ENCODE measurements at regions of chr10 and their contacts with region 1.

Region 1: GRCh38 chr10:124741281-124741921 is 2.8 kb downstream of the FAM53B start:
- DNase-seq: peak; percentile 67
- ATAC-seq: peak; percentile 54
- H3K4me3 Mint-ChIP-seq: peak overlapping the region; percentile 97
- H3K27ac Mint-ChIP-seq: peak overlapping the region; percentile 97
- H3K4me1 Mint-ChIP-seq: peaks cover 75% of the 10 kb centered on the region
- H3K27me3 Mint-ChIP-seq: no peaks in the 10 kb centered on the region
- CTCF ChIP-seq: peak; percentile 41

Region 2: GRCh38 chr10:123994417-123995081 is 746.9 kb before region 1 on chr10:
- CTCF ChIA-PET with region 1: interaction called, 26 read pairs
- POLR2A ChIA-PET with region 1: no interaction called
- intact Hi-C with region 1: loop called (anchors 1 kb)
- DNase-seq: peak; percentile 89
- ATAC-seq: peak; percentile 85
- H3K4me3 Mint-ChIP-seq: peak overlapping the region; percentile 73
- H3K27ac Mint-ChIP-seq: no peak overlapping the region
- H3K4me1 Mint-ChIP-seq: peaks cover 42% of the 10 kb centered on the region
- H3K27me3 Mint-ChIP-seq: peaks cover 38% of the 10 kb centered on the region
- CTCF ChIP-seq: peak; percentile 91

Region 3: GRCh38 chr10:124461438-124462347 is 279.7 kb before region 1 on chr10 and contains the start of gene LHPP:
- CTCF ChIA-PET with region 1: no interaction called
- POLR2A ChIA-PET with region 1: interaction called, 10 read pairs
- intact Hi-C with region 1: loop called (anchors 1 kb)
- DNase-seq: peak; percentile 91
- ATAC-seq: peak; percentile 92
- H3K4me3 Mint-ChIP-seq: peak within 1 kb of the TSS; percentile 92
- H3K27ac Mint-ChIP-seq: peak within 1 kb of the TSS; percentile 95
- H3K4me1 Mint-ChIP-seq: peaks cover 32% of the 10 kb centered on the region
- H3K27me3 Mint-ChIP-seq: peaks cover 4% of the 10 kb centered on the region
- CTCF ChIP-seq: no peak
- total RNA-seq, gene LHPP: 21.0 and 22.9 TPM in 2 replicates

Region 4: DNA sequence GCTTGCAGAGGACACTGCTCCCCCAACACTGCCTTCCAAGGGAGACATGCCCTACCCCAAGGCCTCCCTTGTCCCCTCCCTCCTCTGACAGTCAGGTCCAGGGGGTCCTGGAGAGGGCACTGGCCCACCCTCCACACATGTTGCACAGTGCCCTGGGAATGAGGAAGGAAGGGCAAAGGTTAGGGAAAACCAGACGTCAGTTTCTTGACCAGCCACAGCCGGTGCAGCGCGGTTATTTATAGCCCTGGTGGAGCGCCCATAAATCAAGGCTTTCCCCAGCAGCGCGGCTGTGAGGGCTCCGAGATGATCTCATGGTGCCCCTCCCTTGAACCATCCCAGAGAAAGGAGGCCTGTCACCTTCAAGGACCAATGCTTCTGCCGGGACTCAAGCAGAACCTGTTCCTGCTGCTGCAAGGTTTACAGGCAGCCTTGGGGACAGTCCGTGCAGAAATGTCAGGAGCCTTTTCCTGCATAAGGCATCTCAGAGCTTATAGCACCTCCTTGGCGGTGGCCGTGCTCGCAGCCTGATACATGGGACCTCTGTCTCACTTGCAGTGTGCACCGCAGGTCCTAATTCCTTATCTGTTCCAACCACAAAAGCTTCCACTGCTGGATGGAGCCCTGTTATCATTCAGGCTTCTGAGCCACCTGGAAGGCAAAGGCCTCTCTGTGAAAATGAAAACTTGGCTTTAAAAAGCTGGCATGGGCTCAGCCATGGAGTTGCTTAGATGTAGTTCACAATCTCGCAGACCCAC is 152.5 kb before region 1 on chr10:
- CTCF ChIA-PET with region 1: interaction called, 4 read pairs
- POLR2A ChIA-PET with region 1: interaction called, 11 read pairs
- intact Hi-C with region 1: no loop called
- DNase-seq: no peak
- ATAC-seq: no peak
- H3K4me3 Mint-ChIP-seq: no peak overlapping the region
- H3K27ac Mint-ChIP-seq: no peak overlapping the region
- H3K4me1 Mint-ChIP-seq: peaks cover 57% of the 10 kb centered on the region
- H3K27me3 Mint-ChIP-seq: no peaks in the 10 kb centered on the region
- CTCF ChIP-seq: no peak

Region 5: GRCh38 chr10:124632064-124632531 is 109.3 kb before region 1 on chr10:
- CTCF ChIA-PET with region 1: interaction called, 40 read pairs
- POLR2A ChIA-PET with region 1: interaction called, 13 read pairs
- intact Hi-C with region 1: no loop called
- DNase-seq: no peak
- ATAC-seq: no peak
- H3K4me3 Mint-ChIP-seq: no peak overlapping the region
- H3K27ac Mint-ChIP-seq: peak overlapping the region; percentile 95
- H3K4me1 Mint-ChIP-seq: peaks cover 95% of the 10 kb centered on the region
- H3K27me3 Mint-ChIP-seq: no peaks in the 10 kb centered on the region
- CTCF ChIP-seq: no peak

Region 6: GRCh38 chr10:124688889-124689670 is 52.3 kb before region 1 on chr10:
- CTCF ChIA-PET with region 1: interaction called, 43 read pairs
- POLR2A ChIA-PET with region 1: interaction called, 25 read pairs
- intact Hi-C with region 1: loop called (anchors 1 kb)
- DNase-seq: no peak
- ATAC-seq: peak; percentile 51
- H3K4me3 Mint-ChIP-seq: no peak overlapping the region
- H3K27ac Mint-ChIP-seq: peak overlapping the region; percentile 86
- H3K4me1 Mint-ChIP-seq: peaks cover 84% of the 10 kb centered on the region
- H3K27me3 Mint-ChIP-seq: no peaks in the 10 kb centered on the region
- CTCF ChIP-seq: no peak

Region 7: DNA sequence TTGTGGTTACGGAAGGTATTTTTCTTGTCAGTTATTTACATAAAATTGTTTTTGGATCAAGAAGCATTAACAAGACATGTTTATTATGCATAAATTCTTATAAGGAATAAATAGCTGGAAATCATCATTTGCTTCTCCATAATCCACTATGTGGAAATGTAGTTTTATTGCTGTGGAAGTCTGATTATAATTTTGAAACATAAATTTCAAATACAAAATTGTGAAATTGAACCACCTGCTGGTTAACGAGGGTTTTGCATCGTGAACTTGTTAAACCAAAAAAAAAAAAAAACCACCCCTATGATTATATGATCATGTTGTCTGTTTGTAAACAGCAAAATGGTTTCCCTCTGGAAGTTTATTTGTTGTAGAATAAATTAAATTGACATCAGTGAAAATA is 86.1 kb after region 1 on chr10:
- CTCF ChIA-PET with region 1: no interaction called
- POLR2A ChIA-PET with region 1: no interaction called
- intact Hi-C with region 1: loop called (anchors 2 kb)
- DNase-seq: no peak
- ATAC-seq: no peak
- H3K4me3 Mint-ChIP-seq: no peak overlapping the region
- H3K27ac Mint-ChIP-seq: no peak overlapping the region
- H3K4me1 Mint-ChIP-seq: no peaks in the 10 kb centered on the region
- H3K27me3 Mint-ChIP-seq: no peaks in the 10 kb centered on the region
- CTCF ChIP-seq: no peak

Region 8: DNA sequence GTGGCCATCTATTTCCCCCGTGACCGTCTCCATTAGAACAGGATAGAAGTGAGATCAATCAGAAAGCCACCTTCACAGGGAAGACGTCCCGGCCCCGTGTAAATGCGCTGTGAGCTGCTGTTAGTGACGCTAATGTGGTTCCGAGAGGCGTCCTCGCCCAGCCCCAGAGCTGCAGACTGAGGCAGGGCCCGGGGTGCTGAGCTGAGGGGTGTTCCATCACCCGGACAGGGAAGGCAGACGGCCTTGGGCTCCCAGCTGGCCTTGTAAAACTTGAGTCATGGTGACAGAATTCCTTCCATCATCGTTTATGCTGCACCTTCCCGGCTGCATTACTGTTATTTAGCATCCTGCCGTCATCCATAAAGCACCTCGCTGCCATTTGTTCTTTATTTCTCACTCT is 614.3 kb after region 1 on chr10:
- CTCF ChIA-PET with region 1: no interaction called
- POLR2A ChIA-PET with region 1: no interaction called
- intact Hi-C with region 1: no loop called
- DNase-seq: no peak
- ATAC-seq: no peak
- H3K4me3 Mint-ChIP-seq: no peak overlapping the region
- H3K27ac Mint-ChIP-seq: no peak overlapping the region
- H3K4me1 Mint-ChIP-seq: no peaks in the 10 kb centered on the region
- H3K27me3 Mint-ChIP-seq: peaks cover 10% of the 10 kb centered on the region
- CTCF ChIP-seq: no peak

Measured in activated B cell treated with CpG ODN at 0.5 μM for 24 hours (primary cell).